PC-3 (cell line): ENCODE measurements at regions of chrX and their contacts with region 1.

Region 1: DNA sequence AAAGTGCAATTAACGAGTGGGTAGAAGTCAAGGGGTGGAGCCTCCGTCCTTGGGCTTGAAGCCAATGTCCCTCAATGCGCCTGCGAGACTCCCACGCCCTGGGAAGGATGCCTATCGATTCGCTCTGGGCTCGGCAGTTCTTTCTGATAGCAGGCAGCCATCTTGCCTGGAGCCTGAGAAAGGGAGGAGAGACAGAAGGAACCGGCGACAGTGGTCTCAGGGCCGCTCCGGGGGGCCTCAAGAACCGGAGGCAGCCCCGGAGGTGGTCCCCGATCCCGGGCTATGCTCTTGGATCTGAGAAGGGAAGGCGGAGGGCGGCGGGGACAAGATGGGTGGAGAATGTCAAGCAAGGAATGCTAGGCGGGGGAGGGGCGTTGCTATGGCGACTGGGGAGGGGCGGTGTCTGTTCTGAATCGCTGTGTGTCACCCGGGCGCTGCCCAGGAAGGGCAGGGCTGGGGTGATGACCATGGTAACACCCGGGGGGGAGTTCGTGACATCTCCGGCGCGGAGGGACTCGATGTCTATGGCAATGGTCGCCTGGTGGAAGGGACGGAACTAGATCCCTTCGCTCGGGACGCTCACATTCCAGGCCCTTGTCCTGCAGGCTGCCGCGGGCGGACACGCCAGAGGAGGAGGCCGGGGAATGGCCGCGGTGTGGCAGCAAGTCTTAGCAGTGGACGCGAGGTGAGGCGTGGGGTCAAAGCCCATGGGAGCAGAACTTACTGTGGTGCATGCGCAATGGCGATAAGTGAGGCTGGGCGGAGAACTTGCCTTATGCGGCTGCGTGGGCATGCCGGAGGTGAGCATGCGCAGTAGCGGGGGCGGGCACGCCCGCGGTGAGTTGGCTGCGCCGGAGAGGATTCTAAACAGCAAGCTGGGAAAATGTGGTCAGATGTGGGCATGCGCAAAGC is at the start of gene WDR13:
- DNase-seq: peak; percentile 96
- ATAC-seq: peak; percentile 89
- H3K4me3 ChIP-seq: peak within 1 kb of the TSS; percentile 82
- H3K27ac ChIP-seq: peak within 1 kb of the TSS; percentile 99
- H3K4me1 ChIP-seq: peaks cover 8% of the 10 kb centered on the region
- H3K27me3 ChIP-seq: no peaks in the 10 kb centered on the region
- CTCF ChIP-seq: no peak
- total RNA-seq, gene WDR13: 93.3 and 106 TPM in 2 replicates

Region 2: GRCh38 chrX:48487362-48487785 is 110.2 kb before region 1 on chrX:
- CTCF ChIA-PET with region 1: no interaction called
- POLR2A ChIA-PET with region 1: interaction called, 17 read pairs
- intact Hi-C with region 1: no loop called
- DNase-seq: peak; percentile 97
- ATAC-seq: peak; percentile 85
- H3K4me3 ChIP-seq: no peak overlapping the region
- H3K27ac ChIP-seq: peak overlapping the region; percentile 98
- H3K4me1 ChIP-seq: peaks cover 46% of the 10 kb centered on the region
- H3K27me3 ChIP-seq: no peaks in the 10 kb centered on the region
- CTCF ChIP-seq: no peak

Region 3: GRCh38 chrX:48574270-48575266 is 23.0 kb before region 1 on chrX and contains the start of gene RBM3:
- CTCF ChIA-PET with region 1: no interaction called
- POLR2A ChIA-PET with region 1: no interaction called
- intact Hi-C with region 1: loop called (anchors 1 kb)
- DNase-seq: peak; percentile 92
- ATAC-seq: peak; percentile 95
- H3K4me3 ChIP-seq: peak within 1 kb of the TSS; percentile 99
- H3K27ac ChIP-seq: peak within 1 kb of the TSS; percentile 98
- H3K4me1 ChIP-seq: peaks cover 27% of the 10 kb centered on the region
- H3K27me3 ChIP-seq: no peaks in the 10 kb centered on the region
- CTCF ChIP-seq: peak; percentile 46
- total RNA-seq, gene RBM3: 375 and 389 TPM in 2 replicates